Activated naive CD4-positive, alpha-beta T cell treated with anti-CD3 and anti-CD28 coated beads for 36 hours (primary cell): ENCODE measurements at regions of chr13 and their contacts with region 1.

Region 1: GRCh38 chr13:99214232-99214631 is 13.6 kb downstream of the UBAC2 start:
- DNase-seq: peak; percentile 83
- H3K4me3 Mint-ChIP-seq: peak overlapping the region; percentile 72
- H3K27ac Mint-ChIP-seq: peak overlapping the region; percentile 78
- H3K4me1 Mint-ChIP-seq: peaks cover 82% of the 10 kb centered on the region
- H3K27me3 Mint-ChIP-seq: no peaks in the 10 kb centered on the region

Region 2: DNA sequence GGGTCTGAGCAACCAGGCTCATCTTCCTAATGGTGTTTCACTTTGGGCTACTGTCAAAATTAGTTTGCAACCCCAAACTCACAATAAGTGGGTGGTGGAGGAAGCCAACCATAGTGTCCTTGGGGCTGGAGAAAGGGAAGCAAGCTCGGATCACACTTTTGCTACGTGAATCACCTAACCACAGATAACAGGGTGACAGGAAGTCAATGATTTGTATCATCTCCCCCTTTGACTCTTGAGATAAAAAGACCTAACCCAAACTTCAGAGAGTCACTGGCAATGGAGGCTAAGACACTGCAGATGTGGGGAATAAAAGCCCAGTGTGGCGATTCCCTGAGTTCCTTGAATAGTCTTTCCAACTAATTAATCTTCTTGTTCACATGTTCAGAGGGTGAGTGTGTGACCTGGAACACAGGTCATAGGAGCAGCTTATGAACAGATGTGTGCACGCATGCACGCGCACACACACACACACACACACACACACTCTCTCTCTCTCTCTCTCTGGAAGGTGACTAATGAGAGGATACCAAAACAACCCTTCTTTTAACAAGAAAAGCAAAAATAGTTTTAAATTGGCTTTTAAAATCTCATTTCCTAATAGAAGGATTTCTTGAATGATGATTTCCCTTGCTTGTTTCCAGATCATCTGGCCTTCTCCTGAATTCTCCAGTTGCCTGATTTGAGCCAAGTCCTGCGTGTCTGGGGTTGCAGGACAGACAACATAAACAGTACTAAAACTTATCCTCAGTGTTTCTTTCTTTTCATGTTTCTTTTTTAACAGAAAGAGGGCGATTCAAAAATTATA is 215.2 kb before region 1 on chr13:
- CTCF ChIA-PET with region 1: no interaction called
- intact Hi-C with region 1: loop called (anchors 5 kb)
- DNase-seq: peak; percentile 66
- H3K4me3 Mint-ChIP-seq: no peak overlapping the region
- H3K27ac Mint-ChIP-seq: peak overlapping the region; percentile 67
- H3K4me1 Mint-ChIP-seq: peaks cover 92% of the 10 kb centered on the region
- H3K27me3 Mint-ChIP-seq: no peaks in the 10 kb centered on the region

Region 3: DNA sequence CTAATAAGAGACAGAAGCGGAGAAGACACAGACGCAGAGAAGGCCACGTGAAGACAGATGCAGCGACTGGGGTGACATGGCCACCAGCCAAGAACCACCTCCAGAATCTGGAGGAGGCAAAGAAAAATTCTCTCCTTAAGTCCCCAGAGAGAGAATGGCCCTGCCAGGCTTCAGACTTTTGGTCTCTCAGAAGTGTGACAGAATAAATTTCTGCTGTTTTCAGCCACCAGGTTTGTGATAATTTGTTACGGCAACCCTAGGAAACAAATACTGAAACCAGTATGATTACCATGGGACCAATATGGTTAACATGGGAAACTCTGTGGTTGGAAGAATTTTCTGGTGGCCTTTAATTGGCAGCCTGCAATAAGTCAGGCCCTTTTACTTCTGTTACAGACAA is 172.4 kb before region 1 on chr13:
- CTCF ChIA-PET with region 1: no interaction called
- intact Hi-C with region 1: loop called (anchors 5 kb)
- DNase-seq: no peak
- H3K4me3 Mint-ChIP-seq: no peak overlapping the region
- H3K27ac Mint-ChIP-seq: no peak overlapping the region
- H3K4me1 Mint-ChIP-seq: peaks cover 80% of the 10 kb centered on the region
- H3K27me3 Mint-ChIP-seq: no peaks in the 10 kb centered on the region

Region 4: GRCh38 chr13:99228737-99229691 is 14.8 kb after region 1 on chr13:
- CTCF ChIA-PET with region 1: interaction called, 7 read pairs
- intact Hi-C with region 1: loop called (anchors 1 kb)
- DNase-seq: no peak
- H3K4me3 Mint-ChIP-seq: peak overlapping the region; percentile 56
- H3K27ac Mint-ChIP-seq: peak overlapping the region; percentile 54
- H3K4me1 Mint-ChIP-seq: peaks cover 75% of the 10 kb centered on the region
- H3K27me3 Mint-ChIP-seq: no peaks in the 10 kb centered on the region

Region 5: DNA sequence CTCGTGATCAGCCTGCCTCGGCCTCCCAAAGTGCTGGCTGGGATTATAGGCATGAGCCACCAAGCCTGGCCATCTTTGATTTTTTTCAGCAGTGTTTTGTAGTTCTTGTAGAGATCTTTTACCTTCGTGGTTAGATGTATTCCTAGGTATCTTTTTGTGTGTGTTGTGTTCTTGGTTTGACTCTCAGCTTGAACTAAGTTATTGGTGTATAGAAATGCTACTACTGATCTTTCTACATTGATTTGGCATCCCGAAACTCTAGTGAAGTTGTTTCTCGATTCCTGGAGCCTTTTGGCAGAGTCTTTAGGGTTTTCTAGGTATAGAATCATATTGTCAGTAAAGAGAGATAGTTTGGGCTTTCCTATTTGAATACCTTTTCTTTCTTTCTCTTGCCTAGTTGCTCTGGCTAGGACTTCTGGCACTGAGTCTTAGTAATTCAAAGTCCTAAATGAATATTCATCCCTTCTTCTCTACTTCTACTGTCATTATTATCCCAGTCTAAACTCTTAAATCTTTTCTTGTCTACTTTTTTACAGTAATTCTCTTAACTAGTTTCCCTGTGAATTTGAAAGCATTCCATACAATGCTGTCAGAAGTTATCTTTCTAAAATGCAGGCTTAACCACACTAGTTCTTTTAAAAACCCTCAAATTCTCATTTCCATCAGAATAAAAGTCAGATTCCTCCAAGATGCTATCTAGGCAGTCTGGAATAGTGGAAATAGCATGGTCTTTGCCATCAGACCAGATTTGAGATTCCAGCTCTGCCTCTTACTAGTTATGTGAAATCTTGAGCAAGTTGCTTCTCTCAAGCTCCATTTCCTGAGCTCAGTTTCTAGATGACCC is 37.0 kb after region 1 on chr13:
- CTCF ChIA-PET with region 1: no interaction called
- intact Hi-C with region 1: loop called (anchors 1 kb)
- DNase-seq: no peak
- H3K4me3 Mint-ChIP-seq: no peak overlapping the region
- H3K27ac Mint-ChIP-seq: peak overlapping the region; percentile 54
- H3K4me1 Mint-ChIP-seq: peaks cover 47% of the 10 kb centered on the region
- H3K27me3 Mint-ChIP-seq: no peaks in the 10 kb centered on the region

Region 6: GRCh38 chr13:99314640-99315176 is 100.5 kb after region 1 on chr13:
- CTCF ChIA-PET with region 1: no interaction called
- intact Hi-C with region 1: loop called (anchors 2 kb)
- DNase-seq: peak; percentile 92
- H3K4me3 Mint-ChIP-seq: peak overlapping the region; percentile 54
- H3K27ac Mint-ChIP-seq: peak overlapping the region; percentile 96
- H3K4me1 Mint-ChIP-seq: peaks cover 82% of the 10 kb centered on the region
- H3K27me3 Mint-ChIP-seq: no peaks in the 10 kb centered on the region

Region 7: DNA sequence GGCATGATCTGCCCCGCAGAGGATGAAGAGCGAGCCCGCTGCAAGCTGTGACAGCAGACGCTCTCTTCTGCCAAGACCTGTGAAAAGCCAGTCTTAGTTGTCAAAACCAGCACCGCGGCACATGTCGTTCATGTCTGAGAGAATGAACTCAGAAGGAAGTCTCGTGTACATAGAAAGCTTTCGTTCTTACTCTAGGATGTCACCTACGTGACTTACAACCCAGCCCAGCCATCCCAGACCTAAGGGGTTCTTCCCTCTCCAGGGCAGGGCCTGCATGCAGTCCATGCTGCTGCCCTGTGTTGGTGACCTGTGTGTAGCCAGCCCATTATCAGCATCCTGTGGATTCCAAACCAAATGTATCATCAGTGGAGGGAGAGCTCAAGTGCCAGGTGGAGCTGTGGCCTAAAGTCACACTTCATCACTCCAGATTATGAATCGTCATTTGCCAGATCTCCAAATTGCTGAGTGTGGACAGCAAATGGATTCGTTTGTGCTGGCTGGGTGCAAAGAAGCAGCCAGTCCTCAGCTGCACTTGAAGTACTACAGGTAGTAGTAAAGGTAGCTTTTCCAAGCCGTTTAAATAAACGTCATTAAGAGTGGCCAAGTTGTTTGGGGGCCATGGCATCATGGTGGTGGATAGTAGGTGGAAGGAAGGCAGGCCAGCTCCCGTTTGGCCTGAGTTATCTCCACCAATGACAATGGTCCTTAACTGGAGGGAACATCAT is 166.9 kb after region 1 on chr13:
- CTCF ChIA-PET with region 1: interaction called, 3 read pairs
- intact Hi-C with region 1: loop called (anchors 2 kb)
- DNase-seq: peak; percentile 91
- H3K4me3 Mint-ChIP-seq: no peak overlapping the region
- H3K27ac Mint-ChIP-seq: peak overlapping the region; percentile 79
- H3K4me1 Mint-ChIP-seq: peaks cover 84% of the 10 kb centered on the region
- H3K27me3 Mint-ChIP-seq: no peaks in the 10 kb centered on the region